Mammary epithelial cell (primary cell): ENCODE measurements at regions of chr7 and their contacts with region 1.

Region 1: DNA sequence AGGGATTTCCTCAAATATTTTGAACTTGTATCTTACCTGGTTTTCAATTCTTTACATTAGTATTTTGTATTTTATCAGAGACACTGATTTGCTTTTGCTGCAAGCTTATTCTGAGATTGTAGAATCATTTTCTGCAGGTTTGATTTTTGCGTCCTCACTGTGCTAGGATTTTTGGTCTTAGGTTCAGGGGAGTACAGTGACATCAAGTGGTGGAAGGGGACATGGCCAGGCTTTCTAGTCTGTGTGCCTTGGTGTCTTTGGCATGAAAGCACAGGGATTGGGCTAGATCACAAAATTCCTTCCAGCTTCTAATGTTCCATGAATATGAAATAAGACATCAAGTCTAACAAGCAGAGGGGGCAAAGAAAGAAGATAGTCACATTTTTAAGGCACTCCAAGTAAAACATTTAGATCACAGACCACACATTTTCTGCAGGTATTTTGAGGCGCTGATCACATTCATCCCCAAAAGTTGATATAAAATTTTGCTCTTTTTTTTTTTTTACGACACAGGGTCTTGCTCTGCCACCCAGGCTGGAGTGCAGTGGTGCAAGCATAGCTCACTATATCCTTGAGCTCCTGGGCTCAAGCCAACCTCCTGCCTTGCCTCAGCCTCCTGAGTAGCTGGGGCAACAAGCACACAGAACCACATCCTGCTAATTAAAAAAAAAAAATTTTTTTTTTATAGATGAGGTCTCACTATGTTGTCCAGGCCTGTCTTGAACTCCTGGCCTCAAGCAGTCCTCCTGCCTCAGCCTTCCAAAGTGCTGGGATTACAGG is 124.4 kb downstream of the PON1 start:
- DNase-seq: peak; percentile 17
- H3K4me3 ChIP-seq: no peak overlapping the region
- H3K27ac ChIP-seq: no peak overlapping the region
- H3K4me1 ChIP-seq: no peaks in the 10 kb centered on the region
- H3K27me3 ChIP-seq: peaks cover 12% of the 10 kb centered on the region
- CTCF ChIP-seq: peak; percentile 64 to 88

Region 2: GRCh38 chr7:94436018-94436604 is 763.9 kb before region 1 on chr7:
- CTCF ChIA-PET with region 1: no interaction called
- dilution Hi-C with region 1: loop called (anchors 25 kb)
- in situ Hi-C with region 1: no loop called
- intact Hi-C with region 1: no loop called
- DNase-seq: peak; percentile 47
- H3K4me3 ChIP-seq: no peak overlapping the region
- H3K27ac ChIP-seq: no peak overlapping the region
- H3K4me1 ChIP-seq: no peaks in the 10 kb centered on the region
- H3K27me3 ChIP-seq: peaks cover under 1% of the 10 kb centered on the region
- CTCF ChIP-seq: peak; percentile 80 to 90

Region 3: DNA sequence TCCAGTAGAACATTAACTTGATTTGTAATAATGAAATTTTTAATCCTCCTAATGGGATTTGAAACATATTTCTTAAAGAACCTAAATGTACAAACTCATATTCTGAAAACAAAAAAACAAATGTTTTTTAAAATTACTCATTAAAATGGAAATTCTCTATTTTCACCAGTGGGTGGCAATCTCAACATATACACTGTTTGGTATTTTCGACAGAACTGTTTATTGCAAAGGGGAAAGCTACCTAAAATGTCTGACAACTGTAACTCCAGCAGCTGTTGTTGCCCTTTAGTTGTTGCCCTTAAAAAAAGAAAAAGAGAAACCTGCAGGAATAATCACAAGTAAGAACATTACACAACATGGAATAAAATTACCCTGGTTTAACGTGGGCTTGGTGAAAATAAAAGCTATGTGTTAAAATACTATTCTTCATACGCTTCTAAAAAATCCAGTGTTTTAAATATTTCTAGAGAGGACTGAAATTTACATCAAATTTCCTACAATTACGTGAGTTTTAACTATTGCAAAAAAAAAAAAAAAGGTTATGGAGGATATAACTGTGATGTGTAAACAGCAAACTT is 750.7 kb before region 1 on chr7:
- CTCF ChIA-PET with region 1: interaction called, 4 read pairs
- dilution Hi-C with region 1: loop called (anchors 25 kb)
- in situ Hi-C with region 1: loop called in 1 of 2 experiments (anchors 25 kb)
- intact Hi-C with region 1: loop called (anchors 2 kb)
- DNase-seq: peak; percentile 24
- H3K4me3 ChIP-seq: no peak overlapping the region
- H3K27ac ChIP-seq: no peak overlapping the region
- H3K4me1 ChIP-seq: no peaks in the 10 kb centered on the region
- H3K27me3 ChIP-seq: peaks cover 3% of the 10 kb centered on the region
- CTCF ChIP-seq: peak; percentile 45 to 65

Region 4: DNA sequence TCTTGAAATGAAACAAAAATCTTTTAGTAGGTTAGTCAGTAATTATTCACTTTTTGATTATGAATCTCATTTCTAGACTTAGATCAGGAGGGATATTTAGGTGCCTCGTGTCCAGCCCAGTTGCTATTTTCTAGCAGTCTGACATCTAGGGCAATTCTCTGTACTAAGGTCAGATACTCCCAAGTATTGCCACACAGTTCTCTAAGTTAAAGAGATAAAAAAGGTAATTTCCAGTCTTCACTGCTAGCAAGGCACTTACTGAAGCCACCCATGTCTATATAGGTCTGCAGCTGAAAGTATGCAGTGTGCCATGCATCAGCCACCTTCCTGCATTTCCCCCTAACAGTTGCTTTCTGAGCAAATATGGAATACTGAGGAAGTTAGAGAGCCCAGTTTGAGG is 41.0 kb after region 1 on chr7:
- CTCF ChIA-PET with region 1: no interaction called
- dilution Hi-C with region 1: loop called (anchors 5 kb)
- in situ Hi-C with region 1: no loop called
- intact Hi-C with region 1: no loop called
- DNase-seq: no peak
- H3K4me3 ChIP-seq: no peak overlapping the region
- H3K27ac ChIP-seq: no peak overlapping the region
- H3K4me1 ChIP-seq: no peaks in the 10 kb centered on the region
- H3K27me3 ChIP-seq: peaks cover 2% of the 10 kb centered on the region
- CTCF ChIP-seq: no peak

Region 5: DNA sequence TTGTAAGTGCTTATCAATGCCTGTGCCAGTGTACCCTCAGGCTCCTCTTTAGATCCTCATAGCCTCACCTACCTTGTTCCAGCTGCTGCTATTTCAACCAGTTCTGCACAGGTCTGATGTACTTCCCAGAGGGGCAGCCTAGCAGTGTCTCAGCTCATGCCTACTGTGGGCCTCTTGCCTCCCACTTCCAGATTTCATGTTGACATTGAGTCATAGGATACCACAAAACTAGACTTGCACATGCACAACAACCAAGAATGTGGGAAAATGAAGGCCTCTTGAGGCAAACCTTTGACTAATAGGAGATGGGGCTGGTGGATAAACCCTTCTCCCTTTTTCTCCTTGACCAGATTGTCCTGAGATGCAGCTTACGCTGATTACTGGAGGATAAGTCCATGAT is 165.2 kb after region 1 on chr7:
- CTCF ChIA-PET with region 1: no interaction called
- dilution Hi-C with region 1: no loop called
- in situ Hi-C with region 1: no loop called
- intact Hi-C with region 1: no loop called
- DNase-seq: peak; percentile 60
- H3K4me3 ChIP-seq: no peak overlapping the region
- H3K27ac ChIP-seq: no peak overlapping the region
- H3K4me1 ChIP-seq: no peaks in the 10 kb centered on the region
- H3K27me3 ChIP-seq: no peaks in the 10 kb centered on the region
- CTCF ChIP-seq: no peak